ENCODE measurements at regions of chr12 and their contacts with region 1.

Region 1: GRCh38 chr12:68420225-68421010 is 88.3 kb upstream of the MDM1 start:
- DNase-seq: peak; percentile 14
- H3K4me3 Mint-ChIP-seq: no peak overlapping the region
- H3K27ac Mint-ChIP-seq: peak overlapping the region; percentile 35
- H3K4me1 Mint-ChIP-seq: peaks cover 33% of the 10 kb centered on the region
- H3K27me3 Mint-ChIP-seq: no peaks in the 10 kb centered on the region

Region 2: DNA sequence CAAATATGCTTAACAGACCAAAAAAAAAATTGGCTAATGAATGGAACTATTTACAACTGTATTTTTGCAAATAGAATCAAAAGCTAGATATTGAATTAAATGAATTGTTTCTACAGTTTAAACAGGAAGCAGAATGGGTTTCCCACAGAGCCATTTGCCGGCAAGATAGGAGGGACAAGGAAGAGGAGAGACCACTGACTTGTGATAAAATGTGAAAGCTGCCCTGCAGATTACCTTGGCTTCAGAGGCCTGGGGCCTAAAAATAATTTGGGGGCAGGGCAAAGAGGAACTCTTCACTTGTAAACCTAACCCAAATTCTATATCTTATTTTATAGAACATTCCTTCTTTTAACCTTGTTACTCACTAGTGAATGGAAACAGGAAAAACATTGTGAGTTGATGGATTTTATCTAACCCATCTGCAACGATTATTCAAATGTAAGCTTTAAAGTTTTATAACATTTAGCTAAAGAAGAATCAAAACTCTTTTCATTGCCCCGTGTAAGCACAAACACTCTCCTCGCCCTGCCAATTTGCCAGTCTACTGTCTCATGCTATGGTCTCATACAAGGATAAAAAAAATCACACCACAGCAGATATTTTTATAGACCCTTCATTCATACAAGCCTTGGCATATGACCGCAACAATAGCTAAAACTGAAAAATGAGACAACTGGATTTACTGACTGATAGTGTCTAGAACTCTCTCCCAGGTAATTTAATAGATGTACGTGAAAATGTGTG is 38.8 kb before region 1 on chr12:
- CTCF ChIA-PET with region 1: no interaction called
- POLR2A ChIA-PET with region 1: no interaction called
- intact Hi-C with region 1: loop called (anchors 5 kb)
- DNase-seq: no peak
- H3K4me3 Mint-ChIP-seq: no peak overlapping the region
- H3K27ac Mint-ChIP-seq: no peak overlapping the region
- H3K4me1 Mint-ChIP-seq: peaks cover 6% of the 10 kb centered on the region
- H3K27me3 Mint-ChIP-seq: no peaks in the 10 kb centered on the region

Region 3: GRCh38 chr12:68587448-68587873 is 167.0 kb after region 1 on chr12:
- CTCF ChIA-PET with region 1: no interaction called
- POLR2A ChIA-PET with region 1: no interaction called
- intact Hi-C with region 1: no loop called
- DNase-seq: peak; percentile 70
- H3K4me3 Mint-ChIP-seq: no peak overlapping the region
- H3K27ac Mint-ChIP-seq: peak overlapping the region; percentile 39
- H3K4me1 Mint-ChIP-seq: peaks cover 34% of the 10 kb centered on the region
- H3K27me3 Mint-ChIP-seq: no peaks in the 10 kb centered on the region

Region 4: GRCh38 chr12:68745904-68746571 is 325.6 kb after region 1 on chr12 and contains the start of gene SLC35E3:
- CTCF ChIA-PET with region 1: no interaction called
- POLR2A ChIA-PET with region 1: no interaction called
- intact Hi-C with region 1: no loop called
- DNase-seq: peak; percentile 96
- H3K4me3 Mint-ChIP-seq: peak within 1 kb of the TSS; percentile 92
- H3K27ac Mint-ChIP-seq: peak within 1 kb of the TSS; percentile 64
- H3K4me1 Mint-ChIP-seq: peaks cover 23% of the 10 kb centered on the region
- H3K27me3 Mint-ChIP-seq: no peaks in the 10 kb centered on the region
- total RNA-seq, gene SLC35E3: 4.1 to 5.3 TPM